PC-3 (cell line): ENCODE measurements at regions of chr11 and their contacts with region 1.

Region 1: GRCh38 chr11:78349624-78350023 is 68.0 kb downstream of the GAB2 start:
- DNase-seq: no peak
- ATAC-seq: no peak
- H3K4me3 ChIP-seq: no peak overlapping the region
- H3K27ac ChIP-seq: no peak overlapping the region
- H3K4me1 ChIP-seq: peaks cover 23% of the 10 kb centered on the region
- H3K27me3 ChIP-seq: no peaks in the 10 kb centered on the region
- CTCF ChIP-seq: no peak

Region 2: GRCh38 chr11:78228467-78228866 is 121.2 kb before region 1 on chr11:
- CTCF ChIA-PET with region 1: interaction called, 4 read pairs
- POLR2A ChIA-PET with region 1: no interaction called
- intact Hi-C with region 1: loop called (anchors 10 kb)
- DNase-seq: peak; percentile 86
- ATAC-seq: peak; percentile 81
- H3K4me3 ChIP-seq: no peak overlapping the region
- H3K27ac ChIP-seq: no peak overlapping the region
- H3K4me1 ChIP-seq: peaks cover 11% of the 10 kb centered on the region
- H3K27me3 ChIP-seq: no peaks in the 10 kb centered on the region
- CTCF ChIP-seq: peak; percentile 87

Region 3: GRCh38 chr11:78365381-78365792 is 15.8 kb after region 1 on chr11:
- CTCF ChIA-PET with region 1: no interaction called
- POLR2A ChIA-PET with region 1: no interaction called
- intact Hi-C with region 1: loop called (anchors 1 kb)
- DNase-seq: peak; percentile 87
- ATAC-seq: peak; percentile 95
- H3K4me3 ChIP-seq: peak overlapping the region; percentile 3; the same call in 1 of the 2 replicates
- H3K27ac ChIP-seq: no peak overlapping the region
- H3K4me1 ChIP-seq: peaks cover 18% of the 10 kb centered on the region
- H3K27me3 ChIP-seq: no peaks in the 10 kb centered on the region
- CTCF ChIP-seq: no peak

Region 4: GRCh38 chr11:78564490-78565467 is 215.2 kb after region 1 on chr11:
- CTCF ChIA-PET with region 1: no interaction called
- POLR2A ChIA-PET with region 1: no interaction called
- intact Hi-C with region 1: loop called (anchors 5 kb)
- DNase-seq: peak; percentile 91
- ATAC-seq: peak; percentile 15; the same call in 1 of the 2 replicates
- H3K4me3 ChIP-seq: no peak overlapping the region
- H3K27ac ChIP-seq: no peak overlapping the region
- H3K4me1 ChIP-seq: peaks cover 62% of the 10 kb centered on the region
- H3K27me3 ChIP-seq: no peaks in the 10 kb centered on the region
- CTCF ChIP-seq: peak; percentile 89

Region 5: GRCh38 chr11:78574386-78575381 is 225.1 kb after region 1 on chr11 and contains the start of gene NARS2:
- CTCF ChIA-PET with region 1: no interaction called
- POLR2A ChIA-PET with region 1: interaction called, 10 read pairs
- intact Hi-C with region 1: no loop called
- DNase-seq: peak; percentile 99
- ATAC-seq: peak; percentile 94
- H3K4me3 ChIP-seq: peak within 1 kb of the TSS; percentile 92
- H3K27ac ChIP-seq: peak within 1 kb of the TSS; percentile 21
- H3K4me1 ChIP-seq: peaks cover 21% of the 10 kb centered on the region
- H3K27me3 ChIP-seq: no peaks in the 10 kb centered on the region
- CTCF ChIP-seq: no peak
- total RNA-seq, gene NARS2: 33.5 and 35.5 TPM in 2 replicates

Region 6: DNA sequence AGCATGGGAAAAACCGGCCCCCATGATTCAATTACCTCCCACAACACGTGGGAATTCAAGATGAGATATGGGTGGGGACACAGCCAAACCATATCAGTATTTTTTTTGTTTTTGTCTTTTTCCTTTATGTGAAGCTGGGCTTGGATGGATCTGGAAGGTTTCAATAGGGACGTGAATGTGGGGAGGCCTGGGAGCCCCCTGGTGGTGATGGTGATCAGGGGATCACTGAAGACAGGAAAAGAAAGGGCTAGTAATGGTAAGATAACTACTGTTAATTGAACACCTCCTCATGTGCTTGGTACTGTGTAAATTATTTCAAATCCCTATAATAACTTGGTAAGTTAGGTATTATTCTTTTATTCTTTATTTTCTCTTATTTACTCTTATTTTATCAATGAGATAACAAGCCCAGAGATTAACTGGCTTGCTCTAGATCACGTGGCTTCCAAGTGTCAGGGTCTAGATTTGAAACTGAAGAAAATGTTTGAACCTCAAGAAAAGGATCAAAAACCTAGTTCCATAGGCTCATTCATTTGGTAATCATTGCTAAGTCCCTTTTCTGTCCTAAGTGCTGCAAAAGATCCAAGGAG is 727.0 kb after region 1 on chr11:
- CTCF ChIA-PET with region 1: no interaction called
- POLR2A ChIA-PET with region 1: no interaction called
- intact Hi-C with region 1: no loop called
- DNase-seq: peak; percentile 71
- ATAC-seq: peak; percentile 82
- H3K4me3 ChIP-seq: no peak overlapping the region
- H3K27ac ChIP-seq: no peak overlapping the region
- H3K4me1 ChIP-seq: no peaks in the 10 kb centered on the region
- H3K27me3 ChIP-seq: no peaks in the 10 kb centered on the region
- CTCF ChIP-seq: peak; percentile 81